ENCODE measurements at regions of chr19 and their contacts with region 1.

Region 1: GRCh38 chr19:42386974-42387707 is 3.0 kb downstream of the CNFN start:
- DNase-seq: peak; percentile 83
- H3K4me3 ChIP-seq: peak overlapping the region; percentile 40 to 66 (median 61)
- H3K27ac ChIP-seq: peak overlapping the region; percentile 17
- H3K4me1 ChIP-seq: peaks cover 9% of the 10 kb centered on the region
- H3K27me3 ChIP-seq: peaks cover 4% of the 10 kb centered on the region
- CTCF ChIP-seq: peak; percentile 63 to 72

Region 2: GRCh38 chr19:42375415-42376176 is 11.5 kb before region 1 on chr19:
- CTCF ChIA-PET with region 1: no interaction called
- dilution Hi-C with region 1: no loop called
- in situ Hi-C with region 1: no loop called
- intact Hi-C with region 1: no loop called
- DNase-seq: no peak
- H3K4me3 ChIP-seq: no peak overlapping the region
- H3K27ac ChIP-seq: no peak overlapping the region
- H3K4me1 ChIP-seq: peaks cover 5% of the 10 kb centered on the region
- H3K27me3 ChIP-seq: no peaks in the 10 kb centered on the region
- CTCF ChIP-seq: no peak

Region 3: GRCh38 chr19:42423462-42424344 is 36.6 kb after region 1 on chr19:
- CTCF ChIA-PET with region 1: no interaction called
- dilution Hi-C with region 1: no loop called
- in situ Hi-C with region 1: no loop called
- intact Hi-C with region 1: loop called (anchors 1 kb)
- DNase-seq: peak; percentile 86
- H3K4me3 ChIP-seq: peak overlapping the region; percentile 59 to 66 (median 63)
- H3K27ac ChIP-seq: peak overlapping the region; percentile 12
- H3K4me1 ChIP-seq: peaks cover 45% of the 10 kb centered on the region
- H3K27me3 ChIP-seq: no peaks in the 10 kb centered on the region
- CTCF ChIP-seq: no peak

Region 4: DNA sequence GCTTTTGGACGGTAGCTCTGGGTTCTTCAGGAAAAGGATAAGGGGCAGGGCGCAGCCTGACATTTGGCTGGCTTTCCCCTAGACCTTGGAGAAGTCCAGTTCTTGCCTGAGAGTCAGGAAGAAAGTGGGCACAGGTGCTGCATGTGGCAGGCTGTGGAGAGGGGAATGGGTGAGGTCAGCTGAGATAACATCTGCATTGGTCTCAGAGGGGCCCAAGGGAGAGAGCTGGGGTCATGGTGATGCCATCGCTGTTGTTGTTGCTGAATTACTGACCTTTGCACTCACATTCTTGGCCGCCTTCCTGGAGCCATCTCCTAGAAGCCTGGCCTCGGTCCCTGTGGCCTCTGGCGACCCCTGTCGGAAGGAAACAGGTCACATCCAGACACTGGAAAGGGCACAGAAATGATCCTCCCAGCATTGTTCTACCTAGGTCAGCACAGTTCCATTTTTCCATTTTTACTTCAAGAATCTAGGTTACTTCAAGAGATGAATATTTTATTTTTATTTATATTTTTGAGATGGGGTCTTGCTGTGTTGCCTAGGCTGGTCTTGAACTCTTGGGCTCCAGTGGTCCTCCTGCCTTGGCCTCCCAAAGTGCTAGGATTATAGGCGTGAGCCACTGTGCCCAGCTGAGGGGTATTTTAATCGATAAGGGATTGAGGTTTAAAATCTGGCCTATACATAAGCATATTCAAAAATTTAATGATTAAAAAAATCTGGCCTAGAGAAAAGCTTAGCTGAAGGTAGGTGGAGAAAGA is 46.5 kb after region 1 on chr19:
- CTCF ChIA-PET with region 1: no interaction called
- dilution Hi-C with region 1: no loop called
- in situ Hi-C with region 1: no loop called
- intact Hi-C with region 1: loop called (anchors 1 kb)
- DNase-seq: peak; percentile 39
- H3K4me3 ChIP-seq: no peak overlapping the region
- H3K27ac ChIP-seq: no peak overlapping the region
- H3K4me1 ChIP-seq: no peaks in the 10 kb centered on the region
- H3K27me3 ChIP-seq: no peaks in the 10 kb centered on the region
- CTCF ChIP-seq: peak; percentile 78 to 91

Region 5: DNA sequence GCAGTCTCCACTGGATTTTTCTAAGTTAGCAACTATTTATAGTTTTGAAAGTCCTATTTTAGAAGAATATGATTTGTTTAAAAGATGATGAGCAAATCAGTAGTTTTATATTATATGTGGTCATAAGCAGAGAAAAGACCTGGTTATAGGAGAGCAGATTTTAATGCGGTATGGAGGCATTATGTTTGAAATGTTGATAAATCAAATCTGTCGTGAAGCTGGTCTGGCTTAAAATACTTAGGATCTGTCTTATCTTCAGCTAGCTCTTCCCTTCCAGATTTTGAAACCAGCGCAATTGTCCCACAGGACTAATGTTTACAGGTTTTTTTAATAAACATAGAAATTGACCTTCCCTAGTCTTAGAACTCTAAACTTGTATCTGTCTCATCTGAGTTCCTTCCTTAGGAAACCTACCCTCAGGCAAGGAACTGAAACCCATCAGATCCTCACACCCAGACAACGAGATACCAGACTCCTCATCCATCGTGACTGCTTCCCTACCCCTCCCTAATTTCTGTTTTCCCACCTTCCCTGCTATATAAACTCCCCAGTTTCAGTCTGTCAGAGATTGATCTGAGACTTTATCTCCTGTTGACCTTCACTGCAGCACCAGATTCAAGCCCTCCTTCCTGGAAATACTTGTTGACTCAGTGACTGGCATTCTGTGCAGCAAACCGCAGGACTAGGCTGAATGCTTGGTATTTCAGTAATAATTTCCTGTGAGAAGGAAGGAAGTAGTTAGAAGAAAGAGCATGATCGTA is 93.4 kb after region 1 on chr19:
- CTCF ChIA-PET with region 1: no interaction called
- dilution Hi-C with region 1: no loop called
- in situ Hi-C with region 1: no loop called
- intact Hi-C with region 1: no loop called
- DNase-seq: no peak
- H3K4me3 ChIP-seq: no peak overlapping the region
- H3K27ac ChIP-seq: no peak overlapping the region
- H3K4me1 ChIP-seq: peaks cover 4% of the 10 kb centered on the region
- H3K27me3 ChIP-seq: no peaks in the 10 kb centered on the region
- CTCF ChIP-seq: no peak

Region 6: GRCh38 chr19:42508892-42509444 is 121.8 kb after region 1 on chr19:
- CTCF ChIA-PET with region 1: no interaction called
- dilution Hi-C with region 1: no loop called
- in situ Hi-C with region 1: no loop called
- intact Hi-C with region 1: no loop called
- DNase-seq: no peak
- H3K4me3 ChIP-seq: no peak overlapping the region
- H3K27ac ChIP-seq: no peak overlapping the region
- H3K4me1 ChIP-seq: no peaks in the 10 kb centered on the region
- H3K27me3 ChIP-seq: no peaks in the 10 kb centered on the region
- CTCF ChIP-seq: no peak

Measured in mammary epithelial cell (primary cell).